ENCODE measurements at regions of chr6 and their contacts with region 1.

Region 1: GRCh38 chr6:55886185-55886836 is 10.9 kb upstream of the BMP5 start:
- DNase-seq: no peak
- ATAC-seq: peak in 1 of 4 donors; percentile 42
- H3K4me3 ChIP-seq: no peak overlapping the region
- H3K27ac ChIP-seq: no peak overlapping the region
- H3K4me1 ChIP-seq: peaks cover 0 to 7% (median 5%) of the 10 kb centered on the region in 3 donors
- H3K27me3 ChIP-seq: no peaks in the 10 kb centered on the region
- CTCF ChIP-seq: peak in 1 of 4 donors; percentile 15

Region 2: DNA sequence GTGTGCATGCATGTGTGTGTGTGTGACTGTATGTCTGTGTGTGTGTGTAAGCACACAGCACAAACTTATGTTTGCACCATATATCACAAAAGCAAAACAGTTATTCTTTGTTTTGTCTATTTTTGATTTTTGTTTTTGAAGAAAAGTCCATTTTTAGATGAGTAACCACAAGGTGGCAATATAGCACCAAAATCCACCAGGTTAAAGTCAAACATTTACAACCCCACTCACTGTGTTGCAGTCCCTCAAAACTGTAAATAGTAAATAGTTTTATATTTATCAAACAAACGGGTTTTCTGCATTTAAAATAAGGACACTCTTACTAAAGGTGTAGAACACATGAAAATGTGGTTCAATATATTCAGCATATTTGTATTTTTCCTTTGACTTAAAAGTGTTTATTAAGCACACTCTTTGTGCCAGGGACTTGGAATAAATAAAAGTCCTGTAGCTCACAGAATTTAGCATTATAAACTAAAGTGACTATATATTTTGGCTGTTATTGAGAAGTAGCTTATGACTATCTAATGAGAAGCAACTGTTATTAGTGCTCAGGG is 440.6 kb before region 1 on chr6:
- intact Hi-C with region 1: loop called in 1 of 3 experiments (anchors 10 kb)
- DNase-seq: no peak
- ATAC-seq: peak in 3 of 4 donors; percentile 44 to 70 (median 46)
- H3K4me3 ChIP-seq: no peak overlapping the region
- H3K27ac ChIP-seq: no peak overlapping the region
- H3K4me1 ChIP-seq: peaks cover 0 to 24% (median 20%) of the 10 kb centered on the region in 3 donors
- H3K27me3 ChIP-seq: no peaks in the 10 kb centered on the region
- CTCF ChIP-seq: peak in 2 of 4 donors; percentile 23 to 44

Measured in pancreas (tissue), 10 donors.